Left cardiac atrium (tissue), 4 donors: ENCODE measurements at regions of chr14 and their contacts with region 1.

Region 1: DNA sequence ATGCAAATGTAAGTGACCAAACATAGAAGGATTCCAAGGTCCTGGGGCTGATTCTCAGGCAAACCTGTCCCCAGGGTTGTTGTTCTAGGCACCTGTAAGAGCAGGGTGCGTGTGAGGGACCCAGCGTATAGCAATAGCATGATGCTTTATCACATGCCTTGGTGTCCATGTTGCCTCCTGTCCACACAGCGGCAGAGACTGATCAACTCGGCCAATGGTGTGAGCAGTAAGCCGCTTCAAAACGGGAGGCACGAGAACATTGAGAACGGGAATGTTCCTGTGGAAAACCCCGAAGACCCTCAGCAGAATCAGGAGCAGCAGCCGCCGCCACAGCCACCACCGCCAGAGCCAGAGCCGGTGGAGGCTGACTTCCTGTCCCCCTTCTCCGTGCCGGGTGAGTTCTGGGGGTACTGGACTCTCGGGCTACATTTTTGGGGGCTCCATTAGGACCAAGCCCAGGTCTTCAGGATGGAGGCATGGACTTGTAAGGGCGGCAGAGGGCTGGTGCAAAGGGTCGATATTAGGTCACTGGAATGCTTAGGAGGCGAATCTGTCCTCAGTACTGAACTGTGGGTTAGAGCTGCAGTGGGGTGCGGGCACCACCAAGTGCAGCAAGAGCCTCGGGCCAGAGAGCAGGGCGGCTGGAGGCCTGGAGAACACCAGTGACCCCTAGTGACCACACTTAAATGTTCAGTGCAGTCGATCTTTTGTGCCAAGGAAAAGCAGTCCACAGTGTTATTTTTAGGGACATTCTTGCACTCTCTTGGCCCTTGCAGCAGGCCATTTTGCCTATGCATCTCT is 57.2 kb upstream of the RIN3 start:
- DNase-seq: peak; percentile 66
- ATAC-seq: peak; percentile 69 to 73

Region 2: GRCh38 chr14:92144708-92145107 is 311.7 kb before region 1 on chr14:
- intact Hi-C with region 1: loop called in 1 of 2 experiments (anchors 10 kb)
- DNase-seq: no peak
- ATAC-seq: no peak

Region 3: DNA sequence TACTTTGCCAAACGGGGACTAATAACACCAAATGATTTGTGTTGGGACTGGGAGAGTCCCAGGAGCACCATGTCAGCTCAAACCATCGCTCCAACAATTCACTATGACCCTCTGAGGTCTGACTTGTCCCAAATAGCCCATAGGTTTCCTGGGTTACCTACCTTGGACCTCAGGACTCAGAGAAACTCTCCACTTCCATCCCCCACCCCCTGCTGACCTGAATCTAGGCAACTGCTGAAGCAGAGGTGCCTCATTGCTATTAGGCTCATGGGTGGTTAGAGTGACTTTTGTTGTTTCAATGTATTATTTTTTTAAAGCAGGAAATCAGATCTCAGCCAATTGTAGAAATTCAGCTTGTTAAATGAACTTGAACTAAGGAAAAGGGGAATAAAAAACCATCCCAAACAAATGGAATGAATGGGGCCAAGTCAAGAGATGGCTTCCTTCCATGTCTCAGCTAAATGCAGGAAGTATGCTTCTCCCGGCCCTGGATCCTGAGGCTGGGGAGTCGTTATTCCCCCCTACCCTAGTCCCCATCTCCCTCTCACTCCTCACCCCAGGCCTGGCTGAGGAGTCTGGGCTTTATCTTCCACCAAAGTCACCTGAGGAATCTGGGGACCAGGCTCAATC is 214.3 kb before region 1 on chr14:
- intact Hi-C with region 1: no loop called
- DNase-seq: no peak
- ATAC-seq: no peak